Activated CD4-positive, alpha-beta T cell treated with anti-CD3 and anti-CD28 coated beads for 36 hours (primary cell): ENCODE measurements at regions of chr6 and their contacts with region 1.

Region 1: DNA sequence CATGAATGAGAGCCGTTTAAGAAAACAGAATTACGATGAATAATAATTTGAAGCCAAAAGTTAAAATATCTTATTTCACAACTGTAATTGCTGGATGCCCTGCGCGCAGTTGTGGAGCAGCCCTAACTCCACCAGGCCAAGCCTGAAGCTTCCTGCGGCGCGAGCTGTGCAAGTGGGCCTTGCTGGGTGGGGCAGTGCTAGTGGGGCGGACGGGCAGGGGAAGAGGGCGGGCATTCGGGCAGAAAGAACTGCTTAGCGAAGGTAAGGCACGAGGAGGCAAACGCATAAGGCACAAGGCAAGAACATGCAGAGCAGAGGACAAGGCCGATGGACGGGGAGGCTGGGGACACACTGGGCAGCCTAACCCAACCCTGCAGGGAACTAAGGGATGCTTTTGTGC is 2.3 kb downstream of the HLA-DQB2 start:
- DNase-seq: no peak
- ATAC-seq: peak; percentile 64
- H3K4me3 Mint-ChIP-seq: no peak overlapping the region
- H3K27ac Mint-ChIP-seq: no peak overlapping the region
- H3K4me1 Mint-ChIP-seq: peaks cover 3% of the 10 kb centered on the region
- H3K27me3 Mint-ChIP-seq: peaks cover 22% of the 10 kb centered on the region

Region 2: DNA sequence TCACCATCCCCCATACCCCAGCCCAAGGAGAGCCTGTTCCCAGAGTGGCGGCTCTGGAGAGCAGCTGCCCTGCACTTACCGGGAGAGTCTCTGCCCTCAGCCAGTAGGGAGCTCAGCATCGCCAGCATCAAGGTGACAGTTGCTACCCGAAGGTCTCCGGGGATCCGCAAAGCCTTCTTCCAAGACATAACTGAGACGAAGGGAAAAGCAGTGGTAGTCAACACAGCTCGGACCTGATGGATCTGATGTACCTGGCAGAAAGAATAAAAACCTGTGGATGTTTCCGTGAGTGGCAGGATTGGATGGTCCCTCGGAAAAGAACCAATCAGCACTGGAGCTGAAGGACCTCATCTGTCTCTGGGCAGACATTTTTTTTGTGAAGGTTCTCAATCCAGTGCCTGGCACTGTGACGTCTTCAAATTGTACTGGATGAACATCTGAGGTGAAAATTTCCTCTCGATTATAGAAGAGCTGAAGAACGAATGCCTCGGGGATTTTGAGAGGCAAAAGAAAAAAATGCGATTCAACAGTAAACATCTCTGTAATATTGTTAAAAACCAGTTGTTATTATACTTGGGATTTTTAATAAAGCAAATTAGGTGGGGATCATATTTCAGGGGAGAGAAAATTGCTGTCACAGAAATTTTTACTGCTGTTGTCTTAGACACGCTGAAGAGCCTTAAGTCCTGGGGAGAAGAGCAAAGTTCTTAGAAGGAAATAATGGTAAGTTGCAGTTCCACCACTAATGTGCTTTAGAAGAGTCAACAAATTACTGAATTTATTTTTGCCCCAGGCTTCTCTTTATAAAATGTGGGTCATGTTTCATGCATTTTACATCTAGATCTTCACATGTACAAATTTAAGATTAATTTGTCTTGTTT is 94.4 kb before region 1 on chr6 and contains the start of gene HLA-DQB1:
- CTCF ChIA-PET with region 1: no interaction called
- POLR2A ChIA-PET with region 1: no interaction called
- intact Hi-C with region 1: loop called in 1 of 2 experiments (anchors 1 kb)
- DNase-seq: peak; percentile 60
- ATAC-seq: peak; percentile 81
- H3K4me3 Mint-ChIP-seq: peak within 1 kb of the TSS; percentile 68
- H3K27ac Mint-ChIP-seq: peak within 1 kb of the TSS; percentile 58
- H3K4me1 Mint-ChIP-seq: peaks cover 44% of the 10 kb centered on the region
- H3K27me3 Mint-ChIP-seq: peaks cover 18% of the 10 kb centered on the region
- total RNA-seq, gene HLA-DQB1: 2.3 to 3.1 TPM